Pancreas (tissue), 10 donors: ENCODE measurements at regions of chr20 and their contacts with region 1.

Region 1: DNA sequence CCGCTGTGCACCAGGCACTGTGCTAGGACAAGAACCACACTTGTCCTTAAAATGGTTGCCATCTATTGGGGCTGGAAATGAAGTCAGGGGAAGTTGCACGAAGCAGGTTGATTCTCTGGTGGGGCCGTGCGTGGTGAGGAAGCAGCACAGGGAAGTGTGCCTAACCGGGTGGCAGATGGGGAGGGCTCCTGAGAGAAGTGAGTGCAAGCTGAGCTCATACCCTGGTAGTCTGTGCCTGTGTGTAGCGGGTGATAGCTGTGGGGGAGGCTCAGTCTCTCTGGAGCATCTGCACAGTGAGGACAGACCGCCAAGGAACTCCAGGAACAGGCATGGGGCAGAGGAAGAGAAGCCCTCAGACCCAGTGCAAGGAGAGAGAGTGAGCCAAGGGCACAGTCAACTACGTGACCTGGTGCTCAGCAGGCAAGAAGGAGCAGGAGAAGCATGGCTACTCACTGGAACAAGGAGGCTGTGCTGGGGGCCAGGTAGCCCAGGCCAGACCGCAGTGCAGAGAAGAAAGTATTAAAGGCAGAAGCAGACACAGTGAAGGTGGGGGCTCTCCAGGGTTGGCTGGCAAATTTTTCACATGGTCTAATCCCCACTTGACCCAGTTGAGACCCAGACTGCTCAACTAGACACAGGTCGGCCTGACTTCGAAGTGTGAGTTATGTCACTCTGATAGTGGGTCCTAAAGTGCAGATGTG is 155.0 kb downstream of the CDH26 start:
- DNase-seq: no peak
- ATAC-seq: no peak
- H3K4me3 ChIP-seq: no peak overlapping the region
- H3K27ac ChIP-seq: no peak overlapping the region
- H3K4me1 ChIP-seq: no peaks in the 10 kb centered on the region
- H3K27me3 ChIP-seq: peaks cover 0 to 11% (median 0%) of the 10 kb centered on the region in 4 donors
- CTCF ChIP-seq: no peak

Region 2: DNA sequence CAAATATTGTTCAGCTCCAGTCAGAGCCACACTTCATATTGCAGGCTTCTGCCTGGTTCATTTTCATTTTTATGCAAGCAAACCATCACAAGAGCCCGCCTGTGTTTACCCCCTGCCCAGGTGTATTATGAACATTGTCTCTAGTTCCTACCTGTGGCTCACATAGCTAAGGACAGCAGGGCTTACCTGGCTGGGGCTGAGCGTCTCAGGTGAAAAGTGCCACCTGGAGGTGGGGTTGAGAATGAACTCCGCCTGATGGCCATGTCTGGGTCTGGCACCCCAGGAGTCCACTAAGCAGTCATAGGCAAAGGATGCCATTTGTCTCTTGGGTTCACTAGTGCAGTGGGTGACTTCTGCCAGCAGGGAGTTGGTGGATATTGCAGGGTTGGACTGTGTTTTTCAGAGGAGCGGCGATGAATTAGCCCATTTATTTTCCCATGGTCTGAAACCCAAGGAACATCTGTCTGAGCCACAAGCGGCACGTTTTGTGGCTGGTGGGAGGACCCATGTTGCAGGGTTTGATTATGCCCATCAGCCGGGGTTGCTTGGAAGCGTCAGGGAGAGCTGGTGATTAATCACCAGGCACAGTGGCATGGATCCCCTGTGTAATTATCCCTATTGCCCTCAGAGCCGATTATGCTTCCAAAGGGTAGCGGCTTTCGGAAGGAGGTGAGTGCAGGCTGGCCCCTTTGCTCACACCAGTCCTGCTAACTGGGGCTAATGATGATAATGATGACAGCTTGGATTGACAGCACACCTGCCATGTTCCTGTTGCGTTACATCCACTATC is 62.8 kb before region 1 on chr20:
- intact Hi-C with region 1: no loop called
- DNase-seq: peak in 3 of 6 donors; percentile 13 to 69 (median 51)
- ATAC-seq: peak; percentile 70 to 88 (median 76)
- H3K4me3 ChIP-seq: no peak overlapping the region
- H3K27ac ChIP-seq: no peak overlapping the region
- H3K4me1 ChIP-seq: no peaks in the 10 kb centered on the region
- H3K27me3 ChIP-seq: peaks cover 0 to 16% (median 0%) of the 10 kb centered on the region in 4 donors
- CTCF ChIP-seq: peak; percentile 7 to 41 (median 28)

Region 3: DNA sequence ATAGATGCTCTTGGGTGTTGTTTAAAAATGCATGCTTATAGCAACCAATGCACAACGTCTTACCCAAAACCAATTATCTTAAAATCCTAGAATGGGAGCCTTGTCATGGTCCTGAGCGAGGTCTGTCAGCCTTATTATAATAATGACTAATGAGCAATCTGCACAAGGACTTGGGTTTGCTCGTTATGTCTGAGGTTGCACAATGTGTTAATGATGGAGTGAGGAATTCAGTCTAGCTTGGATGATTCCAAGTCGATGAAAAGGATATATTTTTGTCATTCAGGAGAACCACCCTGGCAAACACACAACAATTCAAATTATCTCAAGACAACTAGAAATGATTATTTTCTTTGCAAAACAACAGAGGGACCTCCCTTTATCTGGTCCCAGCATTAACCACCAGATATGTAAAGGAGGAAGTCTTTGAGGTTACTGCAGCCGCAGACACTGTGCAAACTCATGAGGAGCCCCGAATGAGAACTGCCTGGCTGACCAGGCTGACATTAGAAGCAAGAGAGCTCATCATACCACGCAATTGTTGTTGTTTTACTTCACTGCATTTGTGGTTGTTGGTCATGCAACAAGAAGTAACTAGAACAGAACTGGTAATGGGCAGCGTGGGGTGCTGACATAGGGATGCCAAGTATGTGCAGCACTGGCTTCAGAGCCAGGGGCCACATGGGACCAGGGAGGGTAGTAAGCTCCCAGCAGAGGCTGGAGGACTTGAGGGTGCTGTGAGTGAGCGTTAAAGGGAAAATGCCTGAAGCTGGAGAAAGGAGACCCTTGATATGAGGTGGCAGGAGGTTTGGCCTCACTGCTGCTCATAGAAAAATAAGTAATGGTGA is 333.3 kb after region 1 on chr20:
- intact Hi-C with region 1: loop called in 1 of 3 experiments (anchors 5 kb)
- DNase-seq: no peak
- ATAC-seq: no peak
- H3K4me3 ChIP-seq: no peak overlapping the region
- H3K27ac ChIP-seq: no peak overlapping the region
- H3K4me1 ChIP-seq: no peaks in the 10 kb centered on the region
- H3K27me3 ChIP-seq: peaks cover 0 to 6% (median 0%) of the 10 kb centered on the region in 4 donors
- CTCF ChIP-seq: no peak